ENCODE measurements at regions of chr15 and their contacts with region 1.

Region 1: DNA sequence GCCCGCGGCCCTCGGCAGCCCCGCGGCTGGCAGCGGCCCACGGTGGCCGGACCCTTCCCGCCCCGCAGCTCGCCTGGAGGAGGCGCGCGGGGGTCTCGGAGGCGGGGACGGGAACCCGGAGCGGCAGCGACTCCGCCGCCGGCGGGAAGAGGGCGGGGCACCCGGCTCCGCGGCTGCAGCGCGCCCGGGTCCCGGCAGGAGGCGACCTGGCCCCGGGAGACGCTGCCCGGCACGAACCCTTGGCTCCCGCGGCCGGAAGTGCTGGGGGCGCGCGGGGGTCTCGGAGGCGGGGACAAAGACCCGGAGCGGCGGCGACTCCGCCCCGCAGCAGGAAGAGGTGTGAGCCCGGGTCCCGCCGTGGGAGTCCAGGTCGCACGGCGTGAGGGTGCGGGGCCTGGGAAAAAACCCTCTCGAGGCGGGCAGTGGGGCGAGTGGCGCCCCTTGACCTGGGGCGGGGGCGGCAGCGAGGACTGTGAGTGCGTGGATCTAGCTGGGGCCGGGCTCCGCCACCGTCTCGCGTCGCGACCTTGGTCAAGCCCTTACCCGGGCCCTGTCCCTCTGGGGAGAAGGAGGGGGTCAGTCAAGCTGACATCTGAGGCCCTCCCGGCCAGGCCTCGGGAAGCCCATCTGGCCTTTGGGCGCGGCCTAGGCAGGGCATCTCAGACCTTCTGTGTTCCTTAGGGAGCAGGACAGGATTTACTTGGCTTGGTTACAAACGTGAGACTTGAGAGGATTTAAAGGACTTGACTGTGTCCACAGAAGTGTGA is at the start of gene CIB2:
- DNase-seq: peak; percentile 43
- ATAC-seq: peak; percentile 81
- H3K4me3 ChIP-seq: peak within 1 kb of the TSS; percentile 75 to 87 (median 86)
- H3K27ac ChIP-seq: no peak within 1 kb of the TSS
- H3K4me1 ChIP-seq: peaks cover 39% of the 10 kb centered on the region
- H3K27me3 ChIP-seq: peaks cover 2 to 12% of the 10 kb centered on the region in 2 experiments; a peak in 2 of 5 replicates
- CTCF ChIP-seq: peak; percentile 75
- EP300 ChIP-seq: no peak
- POLR2A ChIP-seq: peak in 1 of 2 experiments; percentile 79; a peak in 2 of 4 replicates
- RAD21 ChIP-seq: peak; percentile 91
- total RNA-seq, gene CIB2: 1.5 and 1.8 TPM in 2 replicates

Region 2: GRCh38 chr15:77915261-77915954 is 216.1 kb before region 1 on chr15:
- CTCF ChIA-PET with region 1: no interaction called
- POLR2A ChIA-PET with region 1: no interaction called
- in situ Hi-C with region 1: no loop called
- intact Hi-C with region 1: no loop called
- DNase-seq: no peak
- ATAC-seq: no peak
- H3K4me3 ChIP-seq: no peak overlapping the region
- H3K27ac ChIP-seq: no peak overlapping the region
- H3K4me1 ChIP-seq: no peaks in the 10 kb centered on the region
- H3K27me3 ChIP-seq: no peaks in the 10 kb centered on the region
- CTCF ChIP-seq: no peak
- EP300 ChIP-seq: no peak
- POLR2A ChIP-seq: no peak
- RAD21 ChIP-seq: no peak

Region 3: GRCh38 chr15:78149068-78149804 is 17.8 kb after region 1 on chr15 and contains the start of gene IDH3A:
- CTCF ChIA-PET with region 1: no interaction called
- POLR2A ChIA-PET with region 1: interaction called, 11 read pairs
- in situ Hi-C with region 1: no loop called
- intact Hi-C with region 1: loop called (anchors 1 kb)
- DNase-seq: peak; percentile 88
- ATAC-seq: peak; percentile 95
- H3K4me3 ChIP-seq: peak within 1 kb of the TSS; percentile 75 to 85 (median 84)
- H3K27ac ChIP-seq: peak within 1 kb of the TSS; percentile 57
- H3K4me1 ChIP-seq: peaks cover 26% of the 10 kb centered on the region
- H3K27me3 ChIP-seq: no peaks in the 10 kb centered on the region
- CTCF ChIP-seq: no peak
- EP300 ChIP-seq: no peak
- POLR2A ChIP-seq: peak; percentile 68 to 88
- RAD21 ChIP-seq: no peak; the same call in 1 of the 2 replicates
- total RNA-seq, gene IDH3A: 50.7 and 130 TPM in 2 replicates